ENCODE measurements at regions of chr5 and their contacts with region 1.

Region 1: DNA sequence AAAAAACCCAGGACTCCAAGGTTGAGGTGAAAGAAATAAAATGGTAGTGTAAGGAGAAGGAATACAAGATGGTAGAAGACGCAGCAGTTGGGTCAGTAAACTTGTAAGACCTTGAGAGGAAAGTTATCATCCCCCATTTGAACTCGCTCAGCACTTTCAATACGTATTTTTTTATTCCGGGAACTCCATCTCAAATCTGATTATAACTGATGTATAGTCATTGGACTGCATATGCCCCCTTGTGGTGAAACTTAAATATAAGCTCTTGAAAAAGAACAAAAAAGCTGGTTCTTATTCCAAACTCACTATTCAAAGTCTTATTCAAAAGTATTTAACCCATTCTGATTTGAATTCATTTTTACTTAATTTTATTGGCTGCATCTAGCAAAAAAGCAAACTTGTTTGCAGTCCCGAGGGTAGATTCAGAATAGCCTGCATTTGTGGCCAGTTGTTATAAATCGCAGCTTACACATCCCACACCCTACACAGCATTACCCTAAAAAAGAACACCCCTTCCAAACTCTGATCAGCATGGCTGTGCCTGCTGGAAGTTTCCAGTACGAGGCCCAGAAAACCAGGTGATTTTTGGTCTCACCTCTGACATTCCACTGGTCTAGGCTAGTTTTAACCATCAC is 118.0 kb downstream of the ESM1 start:
- DNase-seq: no peak
- ATAC-seq: no peak
- H3K4me3 Mint-ChIP-seq: no peak overlapping the region
- H3K27ac Mint-ChIP-seq: no peak overlapping the region
- H3K4me1 Mint-ChIP-seq: peaks cover 4% of the 10 kb centered on the region
- H3K27me3 Mint-ChIP-seq: no peaks in the 10 kb centered on the region
- CTCF ChIP-seq: 0 out of 2 replicates have a peak, but pooled peaks have one; percentile 33

Region 2: GRCh38 chr5:54517174-54518092 is 350.0 kb before region 1 on chr5 and contains the start of gene SNX18:
- CTCF ChIA-PET with region 1: interaction called, 52 read pairs
- POLR2A ChIA-PET with region 1: no interaction called
- DNase-seq: peak; percentile 88
- ATAC-seq: peak; percentile 62
- H3K4me3 Mint-ChIP-seq: peak within 1 kb of the TSS; percentile 70
- H3K27ac Mint-ChIP-seq: no peak within 1 kb of the TSS
- H3K4me1 Mint-ChIP-seq: peaks cover 34% of the 10 kb centered on the region
- H3K27me3 Mint-ChIP-seq: peaks cover 14% of the 10 kb centered on the region
- CTCF ChIP-seq: peak; percentile 85
- total RNA-seq, gene SNX18: 20.3 to 24.6 TPM (median 23.6 TPM) in 3 replicates

Region 3: DNA sequence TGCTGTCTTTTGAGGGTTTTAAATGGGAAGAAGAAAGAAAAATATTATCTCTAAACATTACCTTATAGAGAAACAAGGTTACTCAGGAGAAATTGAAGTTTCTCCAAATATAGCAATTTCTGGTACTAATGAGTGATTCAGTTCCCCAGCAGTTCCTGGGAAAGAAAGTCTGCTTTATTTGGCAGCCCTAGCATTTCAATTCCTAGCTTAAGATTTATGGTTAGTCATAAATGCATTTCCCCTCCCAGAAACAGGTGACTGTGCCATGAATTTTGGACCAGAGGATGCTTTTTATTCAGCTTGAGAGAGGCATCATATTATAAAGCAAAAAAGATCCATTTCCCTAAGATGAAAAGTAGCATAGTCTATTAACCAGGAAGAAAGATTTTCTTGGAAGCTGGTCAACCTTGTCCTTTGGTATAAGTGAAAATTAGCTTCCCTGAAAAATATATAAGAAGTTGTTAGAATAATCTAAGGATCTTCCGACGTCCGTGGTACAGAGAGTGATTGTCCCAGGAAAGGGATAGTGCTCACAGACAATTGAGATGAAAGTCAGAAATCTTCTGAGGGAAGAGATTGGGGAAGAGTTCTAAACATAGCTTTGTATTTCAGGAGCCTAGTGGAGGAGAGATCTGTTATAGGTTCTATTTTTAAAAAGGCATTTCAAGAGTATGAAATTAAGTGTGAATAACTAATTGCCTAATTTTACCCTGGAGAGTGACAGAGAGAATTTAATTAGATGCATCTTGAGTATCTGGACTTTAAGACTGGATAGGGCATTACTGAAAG is 46.9 kb before region 1 on chr5:
- CTCF ChIA-PET with region 1: interaction called, 10 read pairs
- POLR2A ChIA-PET with region 1: no interaction called
- DNase-seq: no peak
- ATAC-seq: no peak
- H3K4me3 Mint-ChIP-seq: no peak overlapping the region
- H3K27ac Mint-ChIP-seq: no peak overlapping the region
- H3K4me1 Mint-ChIP-seq: peaks cover 14% of the 10 kb centered on the region
- H3K27me3 Mint-ChIP-seq: no peaks in the 10 kb centered on the region; the same call in none of the 2 replicates
- CTCF ChIP-seq: no peak

Region 4: GRCh38 chr5:54852007-54852406 is 15.4 kb before region 1 on chr5:
- CTCF ChIA-PET with region 1: interaction called, 11 read pairs
- POLR2A ChIA-PET with region 1: no interaction called
- DNase-seq: no peak
- ATAC-seq: no peak
- H3K4me3 Mint-ChIP-seq: no peak overlapping the region
- H3K27ac Mint-ChIP-seq: no peak overlapping the region
- H3K4me1 Mint-ChIP-seq: no peaks in the 10 kb centered on the region
- H3K27me3 Mint-ChIP-seq: 0 out of 2 replicates have a peak, but pooled peaks cover 1% of the 10 kb centered on the region
- CTCF ChIP-seq: 0 out of 2 replicates have a peak, but pooled peaks have one; percentile 17

Region 5: DNA sequence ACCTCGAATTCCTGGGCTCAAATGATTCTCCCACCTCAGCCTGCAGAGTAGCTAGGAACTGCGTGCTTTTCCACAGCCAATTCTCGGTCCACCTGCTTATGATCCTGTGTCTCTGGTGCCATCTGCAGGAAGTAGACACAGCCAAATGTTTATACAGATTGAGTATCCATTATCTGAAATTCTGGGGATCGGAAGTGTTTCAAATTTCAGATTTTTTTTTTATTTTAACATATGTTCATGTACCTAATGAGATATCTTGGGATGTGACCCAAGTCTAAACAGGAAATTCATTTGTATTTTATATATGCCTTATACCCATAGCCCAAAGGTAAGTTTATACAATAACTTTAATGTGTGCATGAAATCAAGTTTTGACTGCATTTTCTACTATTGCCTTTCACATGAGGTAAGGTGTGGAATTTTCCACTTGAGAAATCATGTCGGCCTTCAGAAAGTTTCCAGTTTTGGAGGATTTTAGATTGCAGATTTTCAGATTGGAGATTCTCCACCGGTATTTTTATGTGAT is 28.5 kb after region 1 on chr5:
- CTCF ChIA-PET with region 1: interaction called, 11 read pairs
- POLR2A ChIA-PET with region 1: no interaction called
- DNase-seq: peak; percentile 17
- ATAC-seq: peak; percentile 69
- H3K4me3 Mint-ChIP-seq: no peak overlapping the region
- H3K27ac Mint-ChIP-seq: no peak overlapping the region
- H3K4me1 Mint-ChIP-seq: peaks cover 4% of the 10 kb centered on the region; the same call in 1 of the 2 replicates
- H3K27me3 Mint-ChIP-seq: peaks cover 3% of the 10 kb centered on the region; the same call in 1 of the 2 replicates
- CTCF ChIP-seq: no peak

Measured in WTC11 (cell line).